Left cardiac atrium (tissue), 4 donors: ENCODE measurements at regions of chr2 and their contacts with region 1.

Region 1: GRCh38 chr2:26605195-26605998 is 35.8 kb downstream of the CIB4 start:
- DNase-seq: no peak
- ATAC-seq: peak; percentile 64 to 72

Region 2: DNA sequence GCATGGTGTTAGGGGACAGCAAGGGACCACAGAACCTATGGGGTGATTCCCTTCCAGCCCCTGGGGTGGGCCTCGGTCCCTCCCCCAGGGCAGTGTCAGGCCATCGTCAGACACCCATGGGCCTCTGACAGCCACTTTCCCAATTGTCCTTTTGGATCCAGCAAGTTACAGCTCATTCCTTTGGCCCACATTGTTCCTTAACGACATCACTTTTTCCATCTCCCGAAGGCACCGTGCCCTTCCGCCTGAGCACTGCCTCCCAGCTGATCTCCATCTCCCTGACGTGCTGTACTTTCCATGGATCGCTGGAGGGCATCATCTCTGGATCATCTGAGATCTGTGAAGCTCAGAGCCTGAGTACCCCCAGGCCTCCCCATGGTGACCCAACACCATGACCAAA is 76.8 kb after region 1 on chr2:
- intact Hi-C with region 1: loop called in 1 of 2 experiments (anchors 5 kb)
- DNase-seq: peak; percentile 17
- ATAC-seq: peak; percentile 51 to 67

Region 3: DNA sequence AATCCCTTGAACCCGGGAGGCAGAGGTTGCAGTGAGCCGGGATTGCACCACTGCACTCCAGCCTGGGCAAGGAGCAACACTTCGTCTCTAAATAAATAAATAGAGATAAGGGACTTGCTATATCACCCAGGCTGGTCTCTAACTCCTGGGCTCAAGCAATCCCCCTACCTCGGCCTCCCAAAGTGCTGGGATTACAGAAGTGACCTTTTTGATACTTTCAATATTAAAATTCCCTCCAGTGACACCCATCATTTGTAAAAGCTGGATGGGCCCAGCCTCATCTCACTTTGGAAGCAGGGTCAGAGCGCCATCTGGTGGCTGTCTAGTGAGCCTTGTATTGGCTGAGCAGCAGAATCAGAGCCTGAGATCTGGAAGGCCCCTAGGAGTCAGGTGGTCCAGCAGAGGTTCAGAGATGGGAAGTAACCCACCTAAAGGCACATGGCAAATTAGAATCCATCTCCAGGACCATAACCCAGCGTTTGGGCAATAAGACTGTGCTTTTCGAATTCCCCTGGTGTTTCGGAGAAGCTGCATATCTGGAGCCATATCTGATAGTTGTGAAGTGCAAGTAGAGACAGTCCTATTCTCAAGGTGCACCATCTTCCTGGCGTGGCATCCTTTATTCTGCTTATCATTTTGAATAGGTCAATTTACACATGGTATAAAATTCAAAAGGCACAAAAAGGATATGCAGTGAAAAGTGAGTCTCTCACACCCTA is 140.4 kb after region 1 on chr2:
- intact Hi-C with region 1: loop called (anchors 1 to 2 kb)
- DNase-seq: peak; percentile 89
- ATAC-seq: peak; percentile 81 to 88